IMR-90 (cell line): ENCODE measurements at regions of chr18 and their contacts with region 1.

Region 1: GRCh38 chr18:44180683-44181082 is 500.0 kb upstream of the SETBP1 start:
- DNase-seq: peak; percentile 3
- ATAC-seq: no peak
- H3K4me3 ChIP-seq: no peak overlapping the region
- H3K27ac ChIP-seq: no peak overlapping the region
- H3K4me1 ChIP-seq: no peaks in the 10 kb centered on the region
- H3K27me3 ChIP-seq: no peaks in the 10 kb centered on the region
- CTCF ChIP-seq: no peak
- POLR2A ChIP-seq: no peak
- RAD21 ChIP-seq: no peak

Region 2: DNA sequence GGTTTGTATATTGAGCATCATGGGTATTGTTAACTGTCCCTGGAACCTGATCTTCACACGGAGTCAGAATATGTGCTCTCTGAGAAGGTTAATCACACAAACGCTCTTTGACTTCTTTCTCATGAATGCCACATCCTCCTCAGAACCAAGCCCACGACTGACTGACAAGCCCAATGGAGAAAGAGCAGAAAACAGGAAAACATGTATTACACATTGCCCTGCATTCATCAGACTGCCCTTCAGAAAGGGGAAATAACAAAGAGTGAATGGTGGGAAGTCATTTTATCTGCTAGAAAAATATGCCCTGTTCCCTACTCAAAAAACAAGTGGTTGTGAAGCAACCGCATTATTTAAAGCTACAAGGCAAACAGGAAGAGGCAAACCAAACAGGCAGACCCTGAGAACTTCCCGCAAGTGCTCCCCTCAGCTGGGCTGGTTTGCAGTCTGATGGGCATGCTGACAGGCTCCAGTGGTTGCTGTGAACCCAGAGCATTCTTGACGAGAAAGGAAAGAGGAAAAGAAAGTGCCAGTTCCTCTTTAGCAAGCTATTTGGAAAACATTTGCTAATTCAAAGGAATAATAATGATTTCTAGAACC is 327.1 kb after region 1 on chr18:
- CTCF ChIA-PET with region 1: no interaction called
- POLR2A ChIA-PET with region 1: no interaction called
- dilution Hi-C with region 1: no loop called
- in situ Hi-C with region 1: no loop called
- intact Hi-C with region 1: no loop called
- DNase-seq: no peak
- ATAC-seq: no peak
- H3K4me3 ChIP-seq: no peak overlapping the region
- H3K27ac ChIP-seq: no peak overlapping the region
- H3K4me1 ChIP-seq: no peaks in the 10 kb centered on the region
- H3K27me3 ChIP-seq: no peaks in the 10 kb centered on the region
- CTCF ChIP-seq: no peak
- POLR2A ChIP-seq: no peak
- RAD21 ChIP-seq: no peak

Region 3: GRCh38 chr18:45441110-45441842 is 1260.6 kb after region 1 on chr18:
- CTCF ChIA-PET with region 1: no interaction called
- POLR2A ChIA-PET with region 1: interaction called, 11 read pairs
- dilution Hi-C with region 1: no loop called
- in situ Hi-C with region 1: no loop called
- intact Hi-C with region 1: no loop called
- DNase-seq: peak; percentile 4
- ATAC-seq: peak; percentile 40; the same call in 1 of the 2 replicates
- H3K4me3 ChIP-seq: no peak overlapping the region
- H3K27ac ChIP-seq: no peak overlapping the region
- H3K4me1 ChIP-seq: no peaks in the 10 kb centered on the region
- H3K27me3 ChIP-seq: peaks cover 2% of the 10 kb centered on the region
- CTCF ChIP-seq: peak; percentile 36
- POLR2A ChIP-seq: no peak
- RAD21 ChIP-seq: peak; percentile 37